ENCODE measurements at regions of chr15 and their contacts with region 1.

Region 1: DNA sequence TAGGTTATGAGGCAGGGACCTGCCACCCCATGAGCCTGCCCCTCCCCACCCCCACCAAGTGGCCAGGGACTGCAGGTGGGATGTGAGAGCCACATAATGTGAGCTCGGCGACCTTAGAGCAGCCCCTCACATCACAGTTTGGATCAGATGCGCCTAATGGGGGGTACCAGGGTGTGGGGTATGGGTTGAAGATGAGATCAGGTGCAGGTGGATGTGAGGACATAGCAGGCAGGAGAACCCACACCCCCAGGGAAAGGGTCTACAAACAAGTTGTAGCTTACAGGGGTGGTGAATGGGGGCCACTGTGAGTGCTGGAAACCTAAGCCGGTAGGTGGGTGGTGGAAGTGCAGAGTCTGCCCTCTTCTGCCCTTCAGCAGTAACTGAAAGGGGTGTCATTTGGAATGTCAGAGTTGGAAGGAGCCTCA is 94.0 kb downstream of the CORO2B start:
- DNase-seq: no peak
- ATAC-seq: no peak
- H3K4me3 ChIP-seq: no peak overlapping the region
- H3K27ac ChIP-seq: no peak overlapping the region
- H3K4me1 ChIP-seq: no peaks in the 10 kb centered on the region
- H3K27me3 ChIP-seq: peaks cover 0 to 8% of the 10 kb centered on the region in 2 experiments; a peak in 2 of 5 replicates
- CTCF ChIP-seq: peak; percentile 10; the same call in 1 of the 2 replicates
- EP300 ChIP-seq: no peak
- POLR2A ChIP-seq: no peak
- RAD21 ChIP-seq: no peak

Region 2: GRCh38 chr15:68550481-68551295 is 122.1 kb before region 1 on chr15:
- CTCF ChIA-PET with region 1: interaction called, 17 read pairs
- POLR2A ChIA-PET with region 1: no interaction called
- in situ Hi-C with region 1: loop called (anchors 5 kb)
- intact Hi-C with region 1: loop called (anchors 1 kb)
- DNase-seq: peak; percentile 41
- ATAC-seq: peak; percentile 72
- H3K4me3 ChIP-seq: no peak overlapping the region
- H3K27ac ChIP-seq: no peak overlapping the region
- H3K4me1 ChIP-seq: no peaks in the 10 kb centered on the region
- H3K27me3 ChIP-seq: no peaks in the 10 kb centered on the region
- CTCF ChIP-seq: peak; percentile 85
- EP300 ChIP-seq: no peak
- POLR2A ChIP-seq: no peak
- RAD21 ChIP-seq: peak; percentile 32; the same call in 1 of the 2 replicates

Region 3: DNA sequence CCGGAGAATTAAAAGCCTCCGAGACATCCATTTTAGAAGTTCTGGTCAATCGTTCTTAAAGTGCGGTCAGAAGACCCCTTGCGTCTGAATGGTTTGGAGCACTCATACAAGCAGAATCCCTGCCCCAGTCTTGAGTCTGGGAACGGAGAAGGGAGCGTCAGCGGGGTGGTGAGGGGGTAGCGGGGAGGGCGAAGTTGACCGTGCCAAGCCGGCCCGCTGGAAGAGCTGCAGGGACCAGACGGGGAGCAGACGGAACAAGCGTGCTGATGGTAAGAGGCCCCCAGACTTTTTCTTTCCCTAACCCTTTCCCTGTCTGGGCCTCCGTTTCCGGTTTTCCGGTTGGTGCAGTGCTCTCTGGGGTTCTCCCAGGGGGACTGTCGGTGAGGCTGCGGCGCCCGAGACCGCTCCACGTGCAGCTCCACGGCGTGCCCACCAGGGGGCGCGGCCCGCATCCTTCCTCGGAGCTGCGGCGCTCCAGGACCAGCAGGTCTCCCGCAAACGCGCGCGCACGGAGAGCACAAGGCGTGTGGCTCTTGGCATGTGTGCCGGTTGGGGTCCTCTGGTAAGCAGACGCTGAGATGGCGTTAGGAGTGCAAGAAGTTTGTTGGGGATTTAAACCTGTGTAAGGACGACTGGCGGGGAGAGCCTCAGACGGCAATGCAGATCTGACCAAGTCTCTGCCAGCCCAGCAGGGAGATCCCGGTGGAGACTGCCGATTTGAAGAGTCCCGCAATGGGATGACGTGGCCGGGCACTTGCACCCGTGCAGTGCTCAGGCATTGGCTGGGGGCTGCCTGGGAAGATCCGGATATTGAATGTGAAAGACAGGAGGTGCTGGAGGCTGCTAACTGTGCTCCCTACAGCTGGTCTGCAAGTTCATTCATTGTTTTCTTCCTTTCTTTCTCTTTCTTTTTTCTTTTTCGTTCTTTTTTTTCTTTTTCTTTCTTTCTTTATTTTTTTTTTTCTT is 113.2 kb before region 1 on chr15:
- CTCF ChIA-PET with region 1: interaction called, 16 read pairs
- POLR2A ChIA-PET with region 1: no interaction called
- in situ Hi-C with region 1: loop called (anchors 5 kb)
- intact Hi-C with region 1: loop called (anchors 1 kb)
- DNase-seq: peak; percentile 33
- ATAC-seq: peak; percentile 93
- H3K4me3 ChIP-seq: no peak overlapping the region
- H3K27ac ChIP-seq: no peak overlapping the region
- H3K4me1 ChIP-seq: peaks cover 4% of the 10 kb centered on the region; the same call in 1 of the 2 replicates
- H3K27me3 ChIP-seq: peaks cover 3 to 12% of the 10 kb centered on the region in 2 experiments; a peak in 2 of 5 replicates
- CTCF ChIP-seq: peak; percentile 96
- EP300 ChIP-seq: no peak
- POLR2A ChIP-seq: no peak
- RAD21 ChIP-seq: peak; percentile 74

Measured in HepG2 (cell line).